Posterior cingulate gyrus (tissue), 11 donors: ENCODE measurements at regions of chr18 and their contacts with region 1.

Region 1: GRCh38 chr18:12744103-12744502 is 41.3 kb downstream of the PSMG2 start:
- DNase-seq: no peak

Region 2: GRCh38 chr18:11512096-11513030 is 1231.7 kb before region 1 on chr18:
- intact Hi-C with region 1: no loop called
- DNase-seq: no peak

Region 3: GRCh38 chr18:12890506-12890905 is 146.4 kb after region 1 on chr18:
- intact Hi-C with region 1: loop called (anchors 5 kb)
- DNase-seq: no peak